ENCODE measurements at regions of chr6 and their contacts with region 1.

Region 1: DNA sequence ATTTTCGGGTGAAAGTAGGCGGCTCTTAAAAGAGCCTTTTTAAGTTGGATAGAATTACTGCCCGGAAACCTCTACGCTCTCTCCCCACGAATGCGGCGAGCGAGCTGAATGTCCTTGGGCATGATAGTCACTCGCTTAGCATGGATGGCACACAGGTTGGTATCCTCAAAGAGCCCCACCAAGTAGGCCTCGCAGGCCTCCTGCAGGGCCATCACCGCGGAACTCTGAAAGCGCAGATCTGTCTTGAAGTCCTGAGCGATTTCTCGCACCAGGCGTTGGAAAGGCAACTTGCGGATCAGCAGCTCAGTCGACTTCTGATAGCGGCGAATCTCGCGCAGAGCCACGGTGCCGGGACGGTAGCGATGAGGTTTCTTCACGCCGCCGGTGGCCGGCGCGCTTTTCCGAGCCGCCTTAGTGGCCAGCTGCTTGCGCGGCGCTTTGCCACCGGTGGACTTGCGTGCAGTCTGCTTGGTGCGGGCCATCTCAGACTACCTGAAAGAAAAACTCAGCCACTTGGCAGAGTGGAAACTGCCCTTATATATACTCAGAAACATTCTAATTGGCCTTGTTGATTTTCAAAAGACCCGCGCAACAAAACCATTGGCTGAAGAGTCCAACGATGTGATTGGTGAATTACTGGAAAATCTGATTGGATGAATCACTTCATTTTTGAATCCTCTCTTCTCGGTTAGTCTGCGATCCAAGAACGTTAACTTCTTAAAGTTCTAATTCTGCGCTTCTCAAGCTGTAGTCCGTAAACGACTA is 93.9 kb upstream of the BTN3A2 start:
- DNase-seq: peak; percentile 61
- H3K4me3 ChIP-seq: peak overlapping the region; percentile 53
- H3K27me3 ChIP-seq: no peaks in the 10 kb centered on the region
- CTCF ChIP-seq: no peak

Region 2: DNA sequence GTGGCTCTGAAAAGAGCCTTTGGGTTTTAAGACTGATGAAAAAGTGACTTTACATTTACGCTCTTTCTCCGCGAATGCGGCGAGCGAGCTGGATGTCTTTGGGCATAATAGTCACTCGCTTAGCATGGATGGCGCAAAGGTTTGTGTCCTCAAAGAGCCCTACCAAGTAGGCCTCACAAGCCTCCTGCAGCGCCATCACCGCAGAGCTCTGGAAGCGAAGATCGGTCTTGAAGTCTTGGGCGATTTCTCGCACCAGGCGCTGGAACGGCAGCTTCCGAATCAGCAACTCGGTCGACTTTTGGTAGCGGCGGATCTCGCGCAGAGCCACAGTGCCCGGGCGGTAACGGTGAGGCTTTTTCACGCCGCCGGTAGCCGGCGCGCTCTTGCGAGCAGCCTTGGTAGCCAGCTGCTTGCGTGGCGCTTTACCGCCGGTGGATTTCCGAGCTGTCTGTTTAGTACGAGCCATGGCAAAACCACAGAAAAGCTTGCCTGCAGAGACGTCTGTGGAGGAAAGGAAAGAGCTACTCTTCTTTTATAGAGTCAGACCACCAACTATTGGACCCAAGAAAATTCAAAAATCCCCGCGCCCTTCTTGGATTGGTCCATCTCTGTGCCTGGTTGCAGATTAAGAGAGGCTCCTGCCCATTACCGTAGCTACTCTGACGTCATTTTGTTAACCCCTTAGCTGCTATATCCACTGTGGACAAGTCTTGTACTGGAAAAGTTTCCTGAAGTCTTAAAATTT is 239.3 kb before region 1 on chr6:
- CTCF ChIA-PET with region 1: no interaction called
- POLR2A ChIA-PET with region 1: interaction called, 16 read pairs
- DNase-seq: peak; percentile 80
- H3K4me3 ChIP-seq: peak overlapping the region; percentile 45
- H3K27me3 ChIP-seq: no peaks in the 10 kb centered on the region
- CTCF ChIP-seq: peak; percentile 39; the same call in 1 of the 2 replicates

Region 3: DNA sequence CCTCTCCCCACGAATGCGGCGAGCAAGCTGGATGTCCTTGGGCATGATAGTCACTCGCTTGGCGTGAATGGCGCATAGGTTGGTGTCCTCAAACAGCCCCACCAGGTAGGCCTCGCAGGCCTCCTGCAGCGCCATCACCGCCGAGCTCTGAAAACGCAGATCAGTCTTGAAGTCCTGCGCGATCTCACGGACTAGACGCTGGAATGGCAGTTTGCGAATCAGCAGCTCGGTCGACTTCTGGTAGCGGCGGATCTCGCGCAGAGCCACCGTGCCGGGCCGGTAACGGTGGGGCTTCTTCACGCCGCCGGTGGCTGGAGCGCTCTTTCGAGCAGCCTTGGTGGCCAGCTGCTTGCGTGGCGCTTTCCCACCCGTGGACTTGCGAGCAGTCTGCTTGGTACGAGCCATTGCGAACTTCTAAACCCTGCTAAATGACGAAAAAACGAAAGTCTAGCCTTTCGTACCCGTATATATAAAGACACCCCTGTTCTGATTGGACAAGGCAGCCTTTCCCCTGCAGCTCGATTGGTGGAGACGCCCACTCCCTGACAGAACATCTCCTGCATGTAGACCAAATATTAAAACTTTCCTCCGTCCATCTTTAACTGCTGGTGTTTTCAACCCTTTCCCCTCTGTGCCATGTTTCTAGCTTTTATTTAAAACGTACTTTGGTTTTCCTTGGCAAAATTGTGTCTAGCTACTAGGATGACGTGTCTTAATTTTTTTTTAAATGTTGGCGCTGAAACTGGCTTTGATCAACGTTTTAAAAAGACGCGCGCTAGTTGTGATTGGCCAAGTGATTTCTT is 74.0 kb before region 1 on chr6:
- CTCF ChIA-PET with region 1: no interaction called
- POLR2A ChIA-PET with region 1: interaction called, 25 read pairs
- DNase-seq: peak; percentile 83
- H3K4me3 ChIP-seq: peak overlapping the region; percentile 82
- H3K27me3 ChIP-seq: no peaks in the 10 kb centered on the region
- CTCF ChIP-seq: 0 out of 2 replicates have a peak, but pooled peaks have one; percentile 13

Region 4: GRCh38 chr6:26223650-26224546 is 47.2 kb before region 1 on chr6:
- CTCF ChIA-PET with region 1: interaction called, 3 read pairs
- POLR2A ChIA-PET with region 1: interaction called, 10 read pairs
- DNase-seq: peak; percentile 95
- H3K4me3 ChIP-seq: peak overlapping the region; percentile 53
- H3K27me3 ChIP-seq: no peaks in the 10 kb centered on the region
- CTCF ChIP-seq: no peak

Region 5: GRCh38 chr6:26249957-26250697 is 21.0 kb before region 1 on chr6:
- CTCF ChIA-PET with region 1: interaction called, 18 read pairs
- POLR2A ChIA-PET with region 1: interaction called, 24 read pairs
- DNase-seq: no peak
- H3K4me3 ChIP-seq: peak overlapping the region; percentile 51
- H3K27me3 ChIP-seq: no peaks in the 10 kb centered on the region
- CTCF ChIP-seq: peak; percentile 52

Region 6: DNA sequence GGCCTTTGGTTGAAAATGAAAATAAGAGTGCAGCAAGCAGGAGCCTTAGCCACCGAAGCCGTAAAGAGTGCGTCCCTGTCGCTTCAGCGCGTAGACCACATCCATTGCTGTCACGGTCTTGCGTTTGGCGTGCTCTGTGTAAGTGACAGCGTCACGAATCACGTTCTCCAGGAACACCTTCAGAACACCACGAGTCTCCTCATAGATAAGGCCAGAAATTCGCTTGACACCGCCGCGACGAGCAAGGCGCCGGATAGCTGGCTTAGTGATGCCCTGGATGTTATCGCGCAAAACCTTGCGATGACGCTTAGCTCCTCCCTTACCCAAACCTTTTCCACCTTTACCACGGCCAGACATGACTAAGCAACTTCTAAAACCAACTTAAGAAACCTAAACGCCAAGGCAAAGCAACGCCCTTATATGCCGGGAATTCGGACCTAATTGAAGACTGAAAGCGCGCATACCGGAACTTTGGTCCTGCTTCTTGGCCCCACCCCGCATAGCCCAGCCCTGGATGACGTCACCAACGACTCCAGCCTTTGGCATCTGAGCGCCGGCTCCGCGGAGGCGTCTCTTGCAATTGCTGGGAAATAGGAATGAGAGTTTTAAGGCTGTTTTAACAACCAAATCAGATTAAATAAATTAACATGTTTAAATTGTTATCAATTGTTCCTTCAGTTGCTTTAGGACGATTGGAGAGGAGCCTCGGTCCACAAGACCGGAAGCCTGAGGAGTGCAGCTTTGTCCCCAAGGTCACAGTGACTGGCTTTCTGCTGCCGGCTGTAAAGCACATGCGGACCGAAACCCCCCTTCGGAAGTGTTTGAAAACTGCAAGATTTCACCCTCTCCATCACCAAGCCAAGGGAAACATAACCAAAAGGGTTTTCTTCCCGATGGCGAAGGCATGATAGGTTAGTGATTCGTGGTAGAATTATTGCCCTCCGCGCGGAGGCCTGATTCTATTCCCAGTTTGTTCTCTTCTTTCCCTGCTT is 14.4 kb after region 1 on chr6:
- CTCF ChIA-PET with region 1: interaction called, 6 read pairs
- POLR2A ChIA-PET with region 1: interaction called, 41 read pairs
- DNase-seq: peak; percentile 97
- H3K4me3 ChIP-seq: peak overlapping the region; percentile 46
- H3K27me3 ChIP-seq: no peaks in the 10 kb centered on the region
- CTCF ChIP-seq: no peak

Region 7: GRCh38 chr6:26553264-26553634 is 282.2 kb after region 1 on chr6:
- CTCF ChIA-PET with region 1: no interaction called
- POLR2A ChIA-PET with region 1: no interaction called
- DNase-seq: no peak
- H3K4me3 ChIP-seq: peak overlapping the region; percentile 35
- H3K27me3 ChIP-seq: no peaks in the 10 kb centered on the region
- CTCF ChIP-seq: no peak